Endothelial cell of umbilical vein (primary cell): ENCODE measurements at regions of chr10 and their contacts with region 1.

Region 1: DNA sequence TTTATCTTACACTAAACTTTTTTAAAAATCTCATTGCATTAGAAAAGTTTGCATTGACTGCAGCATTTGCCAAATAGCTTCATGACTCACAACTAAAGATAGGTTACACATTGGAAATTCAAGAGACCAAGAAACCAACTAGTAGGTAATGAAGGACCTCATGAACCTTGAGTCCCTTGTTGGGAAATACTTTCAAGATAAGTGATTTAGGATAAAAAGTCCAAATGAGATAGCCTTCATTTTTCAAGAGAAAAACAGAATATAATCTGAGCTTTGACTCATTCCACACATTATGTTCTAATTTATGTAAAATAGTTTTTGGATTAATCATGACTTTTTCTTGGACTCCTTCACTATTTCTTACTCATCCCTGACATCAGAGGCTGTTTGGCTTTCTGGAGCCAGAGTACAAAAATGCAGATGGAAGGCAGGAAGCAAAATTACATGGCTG is 13.1 kb upstream of the LIPF start:
- DNase-seq: peak; percentile 82
- H3K4me3 ChIP-seq: no peak overlapping the region
- H3K27ac ChIP-seq: peak overlapping the region; percentile 76
- H3K4me1 ChIP-seq: peaks cover 30% of the 10 kb centered on the region
- H3K27me3 ChIP-seq: no peaks in the 10 kb centered on the region
- CTCF ChIP-seq: no peak
- POLR2A ChIP-seq: peak; percentile 21

Region 2: GRCh38 chr10:88680958-88681357 is 29.8 kb after region 1 on chr10:
- CTCF ChIA-PET with region 1: no interaction called
- POLR2A ChIA-PET with region 1: interaction called, 3 read pairs
- dilution Hi-C with region 1: no loop called
- intact Hi-C with region 1: loop called (anchors 2 kb)
- DNase-seq: peak; percentile 42
- H3K4me3 ChIP-seq: no peak overlapping the region
- H3K27ac ChIP-seq: peak overlapping the region; percentile 45
- H3K4me1 ChIP-seq: peaks cover 9% of the 10 kb centered on the region
- H3K27me3 ChIP-seq: no peaks in the 10 kb centered on the region
- CTCF ChIP-seq: no peak
- POLR2A ChIP-seq: no peak

Region 3: GRCh38 chr10:88820748-88821389 is 169.7 kb after region 1 on chr10:
- CTCF ChIA-PET with region 1: no interaction called
- POLR2A ChIA-PET with region 1: no interaction called
- dilution Hi-C with region 1: no loop called
- intact Hi-C with region 1: no loop called
- DNase-seq: no peak
- H3K4me3 ChIP-seq: no peak overlapping the region
- H3K27ac ChIP-seq: no peak overlapping the region
- H3K4me1 ChIP-seq: no peaks in the 10 kb centered on the region
- H3K27me3 ChIP-seq: peaks cover 0 to 5% of the 10 kb centered on the region in 2 experiments
- CTCF ChIP-seq: no peak
- POLR2A ChIP-seq: no peak